ENCODE measurements at regions of chr12 and their contacts with region 1.

Region 1: DNA sequence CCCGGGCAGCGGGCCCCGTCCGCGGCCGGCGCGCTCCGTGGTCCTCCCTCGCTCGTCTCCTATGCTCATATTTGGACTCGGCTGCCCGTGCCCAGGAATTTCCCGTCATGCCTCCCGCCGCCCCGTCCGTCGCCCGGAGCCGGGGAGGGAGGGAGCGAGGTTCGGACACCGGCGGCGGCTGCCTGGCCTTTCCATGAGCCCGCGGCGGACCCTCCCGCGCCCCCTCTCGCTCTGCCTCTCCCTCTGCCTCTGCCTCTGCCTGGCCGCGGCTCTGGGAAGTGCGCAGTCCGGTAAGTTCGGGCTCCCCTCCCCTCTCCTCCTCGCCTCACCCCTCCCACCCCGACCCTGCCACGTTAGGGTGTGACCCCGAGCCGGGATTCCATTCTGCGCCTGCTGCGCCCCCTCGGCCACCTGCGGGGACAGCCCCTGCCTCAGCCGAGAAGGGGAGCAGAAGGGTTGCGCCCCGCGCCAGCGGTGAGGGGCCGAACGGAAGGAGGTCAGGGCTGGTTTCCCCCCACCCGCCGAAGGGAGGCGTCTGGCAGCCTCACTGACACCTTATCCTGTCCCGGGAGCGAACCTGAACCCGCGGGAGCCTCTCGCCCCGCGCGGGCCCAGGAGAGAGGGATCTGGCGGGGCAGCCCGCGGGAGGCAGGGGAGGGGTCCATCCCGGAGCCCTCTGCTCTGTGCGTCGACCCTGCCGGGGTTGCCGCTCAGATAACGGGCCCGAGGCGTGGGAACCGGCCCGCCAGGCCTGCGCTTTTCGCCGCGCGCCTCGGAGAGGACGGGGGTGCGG is at the start of gene MSRB3:
- DNase-seq: peak in 1 of 2 donors; percentile 88
- H3K4me3 ChIP-seq: peak within 1 kb of the TSS; percentile 79 to 94
- H3K27ac ChIP-seq: peak within 1 kb of the TSS; percentile 97 to 99
- H3K4me1 ChIP-seq: peaks cover 0 to 23% of the 10 kb centered on the region in 2 donors
- H3K27me3 ChIP-seq: no peaks in the 10 kb centered on the region
- CTCF ChIP-seq: peak in 1 of 3 experiments; percentile 11
- total RNA-seq, gene MSRB3: 79.4 TPM

Region 2: DNA sequence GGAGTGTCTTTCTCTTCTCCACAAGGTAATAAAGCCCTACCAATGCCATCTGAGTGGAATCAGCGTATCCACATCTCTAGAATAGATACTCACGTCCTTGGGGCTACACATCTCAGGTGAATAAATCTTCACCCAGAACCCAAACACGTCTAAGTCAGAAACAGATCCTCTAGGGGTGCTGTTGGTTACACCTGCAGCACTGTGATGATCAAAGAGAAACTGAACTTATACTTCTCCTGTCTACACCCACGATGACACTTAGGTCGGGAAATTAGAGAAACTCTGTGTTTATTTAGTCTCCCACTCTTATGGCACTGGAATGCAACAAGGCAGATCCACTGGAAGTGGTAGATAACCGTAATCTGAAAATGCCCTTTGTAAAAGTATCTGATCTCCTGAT is 203.8 kb before region 1 on chr12:
- intact Hi-C with region 1: no loop called
- DNase-seq: no peak
- H3K4me3 ChIP-seq: no peak overlapping the region
- H3K27ac ChIP-seq: no peak overlapping the region
- H3K4me1 ChIP-seq: no peaks in the 10 kb centered on the region
- H3K27me3 ChIP-seq: no peaks in the 10 kb centered on the region
- CTCF ChIP-seq: no peak

Region 3: GRCh38 chr12:65093606-65094005 is 185.2 kb before region 1 on chr12:
- intact Hi-C with region 1: no loop called
- DNase-seq: no peak
- H3K4me3 ChIP-seq: no peak overlapping the region
- H3K27ac ChIP-seq: no peak overlapping the region
- H3K4me1 ChIP-seq: no peaks in the 10 kb centered on the region
- H3K27me3 ChIP-seq: no peaks in the 10 kb centered on the region
- CTCF ChIP-seq: no peak

Region 4: GRCh38 chr12:65252515-65252914 is 26.3 kb before region 1 on chr12:
- intact Hi-C with region 1: loop called (anchors 2 kb)
- DNase-seq: no peak
- H3K4me3 ChIP-seq: no peak overlapping the region
- H3K27ac ChIP-seq: no peak overlapping the region
- H3K4me1 ChIP-seq: peaks cover 0 to 12% of the 10 kb centered on the region in 2 donors
- H3K27me3 ChIP-seq: no peaks in the 10 kb centered on the region
- CTCF ChIP-seq: no peak

Region 5: DNA sequence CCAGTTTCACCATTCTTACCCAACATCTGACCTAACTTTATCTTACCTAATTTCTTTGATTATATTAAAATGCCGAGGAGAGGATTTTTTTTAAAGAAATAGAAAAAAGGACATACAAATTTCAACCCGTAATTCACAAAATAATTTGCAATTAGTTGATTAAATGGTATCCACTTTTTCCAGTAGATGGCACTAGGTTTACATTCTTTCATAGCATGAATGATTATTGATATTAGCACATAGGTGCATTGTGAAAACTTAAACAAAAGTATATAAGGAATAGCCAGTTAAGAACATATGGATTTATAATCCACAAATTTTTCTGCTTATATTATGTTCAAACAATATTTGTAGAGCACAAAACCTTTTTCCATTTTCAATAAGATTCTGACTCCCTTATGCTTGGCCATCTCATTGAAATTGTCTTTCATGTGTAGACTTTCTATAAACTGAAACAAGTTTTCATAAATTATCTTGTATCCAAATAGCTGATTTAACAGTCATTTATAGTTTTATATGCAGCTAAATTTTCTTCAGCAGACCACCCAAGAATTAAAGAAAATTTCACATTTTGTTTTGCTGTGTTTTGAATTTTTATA is 35.0 kb after region 1 on chr12:
- intact Hi-C with region 1: no loop called
- DNase-seq: no peak
- H3K4me3 ChIP-seq: no peak overlapping the region
- H3K27ac ChIP-seq: no peak overlapping the region
- H3K4me1 ChIP-seq: no peaks in the 10 kb centered on the region
- H3K27me3 ChIP-seq: no peaks in the 10 kb centered on the region
- CTCF ChIP-seq: peak in 1 of 3 experiments; percentile 29

Region 6: GRCh38 chr12:65656904-65657351 is 378.2 kb after region 1 on chr12:
- intact Hi-C with region 1: no loop called
- DNase-seq: no peak
- H3K4me3 ChIP-seq: no peak overlapping the region
- H3K27ac ChIP-seq: no peak overlapping the region
- H3K4me1 ChIP-seq: no peaks in the 10 kb centered on the region
- H3K27me3 ChIP-seq: no peaks in the 10 kb centered on the region
- CTCF ChIP-seq: no peak

Measured in ascending aorta (tissue), 2 donors.